ENCODE measurements at regions of chr16 and their contacts with region 1.

Region 1: DNA sequence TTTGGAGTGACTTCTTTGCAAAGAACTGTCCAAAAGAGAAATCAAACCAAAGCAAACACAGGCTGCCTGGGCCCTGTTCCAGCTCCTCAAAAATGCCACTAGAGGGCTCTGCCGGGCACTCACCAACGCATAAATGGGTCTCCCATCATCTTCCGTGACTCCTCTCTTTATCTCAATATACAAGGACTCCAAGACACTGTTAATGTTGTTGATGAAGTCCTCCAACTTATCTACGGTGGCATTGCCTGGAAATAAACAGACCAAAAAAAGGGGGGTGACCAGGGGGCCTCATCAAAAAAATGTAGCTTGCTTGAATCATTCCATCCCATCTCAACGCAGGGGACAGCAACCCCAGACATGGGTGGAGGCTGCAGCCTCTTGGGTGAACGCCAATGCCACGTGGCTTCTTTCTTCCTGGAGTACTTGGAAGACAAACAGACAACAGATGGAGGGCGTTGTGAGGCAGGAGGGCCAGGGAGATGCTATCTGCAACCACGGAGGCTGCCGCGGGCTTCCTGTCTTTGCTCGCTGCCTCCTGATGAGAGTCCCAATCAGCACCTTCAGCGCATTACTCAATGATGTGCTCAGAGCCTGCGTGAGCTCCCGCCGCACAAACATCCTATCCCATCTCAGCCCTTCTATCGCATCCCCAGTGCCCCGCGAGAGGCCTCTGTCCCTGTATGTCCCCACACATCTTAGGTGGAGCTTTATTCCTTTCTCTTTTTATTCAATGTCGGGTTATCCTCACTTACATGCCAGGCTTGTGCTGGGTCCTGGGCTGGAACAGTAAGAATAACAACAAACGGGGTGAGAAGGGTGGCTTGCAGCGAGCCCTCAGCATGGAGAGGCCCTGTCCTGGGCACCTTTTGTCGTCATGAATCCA is 32.0 kb downstream of the KDM8 start:
- DNase-seq: peak; percentile 53
- H3K4me3 Mint-ChIP-seq: no peak overlapping the region
- H3K27ac Mint-ChIP-seq: peak overlapping the region; percentile 57
- H3K4me1 Mint-ChIP-seq: peaks cover 24% of the 10 kb centered on the region
- H3K27me3 Mint-ChIP-seq: no peaks in the 10 kb centered on the region
- CTCF ChIP-seq: peak; percentile 69

Region 2: GRCh38 chr16:27449434-27450195 is 214.3 kb after region 1 on chr16:
- CTCF ChIA-PET with region 1: no interaction called
- intact Hi-C with region 1: loop called (anchors 10 kb)
- DNase-seq: no peak
- H3K4me3 Mint-ChIP-seq: no peak overlapping the region
- H3K27ac Mint-ChIP-seq: no peak overlapping the region
- H3K4me1 Mint-ChIP-seq: no peaks in the 10 kb centered on the region
- H3K27me3 Mint-ChIP-seq: peaks cover 75% of the 10 kb centered on the region
- CTCF ChIP-seq: no peak